ENCODE measurements at regions of chr9 and their contacts with region 1.

Region 1: DNA sequence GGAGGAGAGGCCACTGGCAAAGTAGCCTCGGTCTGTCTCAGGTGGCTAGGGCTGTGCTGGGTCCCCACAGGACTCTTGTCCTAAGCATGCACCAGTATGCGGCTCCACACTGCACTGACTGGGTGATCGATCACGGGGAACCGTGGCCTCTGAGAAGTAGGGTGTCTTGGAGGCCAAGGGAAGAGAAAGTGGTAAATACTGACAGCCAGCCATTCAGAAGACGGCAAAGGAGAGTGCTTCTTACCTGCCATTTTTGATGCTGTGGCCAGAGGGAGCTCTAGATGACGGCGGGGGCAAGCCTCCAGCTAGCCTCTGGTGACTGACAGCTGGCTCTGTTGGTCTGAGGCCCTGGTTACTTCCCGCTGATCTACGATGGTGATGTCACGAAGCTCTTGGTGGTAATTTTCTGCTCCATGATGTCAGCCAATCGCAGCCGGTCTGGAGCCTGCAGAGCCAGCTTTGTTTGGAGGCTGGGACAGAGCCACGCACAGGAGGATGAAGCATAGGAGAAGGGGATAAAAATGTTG is 40.4 kb upstream of the GADD45G start:
- DNase-seq: no peak
- ATAC-seq: peak; percentile 98
- H3K4me3 ChIP-seq: no peak overlapping the region
- H3K27ac ChIP-seq: no peak overlapping the region
- H3K4me1 ChIP-seq: peaks cover 6% of the 10 kb centered on the region; the same call in 1 of the 2 replicates
- H3K27me3 ChIP-seq: no peaks in the 10 kb centered on the region
- CTCF ChIP-seq: peak; percentile 46 to 50 (median 50)
- EP300 ChIP-seq: no peak
- POLR2A ChIP-seq: no peak
- RAD21 ChIP-seq: peak; percentile 21; the same call in 1 of the 2 replicates

Region 2: GRCh38 chr9:89036383-89036782 is 528.0 kb before region 1 on chr9:
- CTCF ChIA-PET with region 1: no interaction called
- POLR2A ChIA-PET with region 1: no interaction called
- RAD21 ChIA-PET with region 1: no interaction called
- SMC1A ChIA-PET with region 1: no interaction called
- in situ Hi-C with region 1: no loop called
- intact Hi-C with region 1: no loop called
- DNase-seq: no peak
- ATAC-seq: no peak
- H3K4me3 ChIP-seq: no peak overlapping the region
- H3K27ac ChIP-seq: no peak overlapping the region
- H3K4me1 ChIP-seq: no peaks in the 10 kb centered on the region
- H3K27me3 ChIP-seq: no peaks in the 10 kb centered on the region; a peak in 1 of 4 replicates
- CTCF ChIP-seq: no peak
- EP300 ChIP-seq: no peak
- POLR2A ChIP-seq: no peak
- RAD21 ChIP-seq: no peak

Region 3: GRCh38 chr9:89576404-89576839 is 12.0 kb after region 1 on chr9:
- CTCF ChIA-PET with region 1: interaction called, 17 read pairs
- POLR2A ChIA-PET with region 1: no interaction called
- RAD21 ChIA-PET with region 1: interaction called, 3 read pairs
- SMC1A ChIA-PET with region 1: interaction called, 4 read pairs
- in situ Hi-C with region 1: no loop called
- intact Hi-C with region 1: no loop called
- DNase-seq: no peak
- ATAC-seq: no peak
- H3K4me3 ChIP-seq: no peak overlapping the region
- H3K27ac ChIP-seq: no peak overlapping the region
- H3K4me1 ChIP-seq: no peaks in the 10 kb centered on the region
- H3K27me3 ChIP-seq: no peaks in the 10 kb centered on the region; a peak in 2 of 4 replicates
- CTCF ChIP-seq: peak; percentile 34 to 58 (median 49); a peak in 5 of 6 replicates
- EP300 ChIP-seq: no peak
- POLR2A ChIP-seq: no peak
- RAD21 ChIP-seq: peak; percentile 63

Region 4: GRCh38 chr9:89675058-89675742 is 110.8 kb after region 1 on chr9:
- CTCF ChIA-PET with region 1: no interaction called
- POLR2A ChIA-PET with region 1: no interaction called
- RAD21 ChIA-PET with region 1: no interaction called
- SMC1A ChIA-PET with region 1: no interaction called
- in situ Hi-C with region 1: no loop called
- intact Hi-C with region 1: no loop called
- DNase-seq: no peak
- ATAC-seq: no peak
- H3K4me3 ChIP-seq: no peak overlapping the region
- H3K27ac ChIP-seq: no peak overlapping the region
- H3K4me1 ChIP-seq: no peaks in the 10 kb centered on the region
- H3K27me3 ChIP-seq: no peaks in the 10 kb centered on the region; a peak in 1 of 4 replicates
- CTCF ChIP-seq: no peak
- EP300 ChIP-seq: no peak
- POLR2A ChIP-seq: no peak
- RAD21 ChIP-seq: no peak

Region 5: DNA sequence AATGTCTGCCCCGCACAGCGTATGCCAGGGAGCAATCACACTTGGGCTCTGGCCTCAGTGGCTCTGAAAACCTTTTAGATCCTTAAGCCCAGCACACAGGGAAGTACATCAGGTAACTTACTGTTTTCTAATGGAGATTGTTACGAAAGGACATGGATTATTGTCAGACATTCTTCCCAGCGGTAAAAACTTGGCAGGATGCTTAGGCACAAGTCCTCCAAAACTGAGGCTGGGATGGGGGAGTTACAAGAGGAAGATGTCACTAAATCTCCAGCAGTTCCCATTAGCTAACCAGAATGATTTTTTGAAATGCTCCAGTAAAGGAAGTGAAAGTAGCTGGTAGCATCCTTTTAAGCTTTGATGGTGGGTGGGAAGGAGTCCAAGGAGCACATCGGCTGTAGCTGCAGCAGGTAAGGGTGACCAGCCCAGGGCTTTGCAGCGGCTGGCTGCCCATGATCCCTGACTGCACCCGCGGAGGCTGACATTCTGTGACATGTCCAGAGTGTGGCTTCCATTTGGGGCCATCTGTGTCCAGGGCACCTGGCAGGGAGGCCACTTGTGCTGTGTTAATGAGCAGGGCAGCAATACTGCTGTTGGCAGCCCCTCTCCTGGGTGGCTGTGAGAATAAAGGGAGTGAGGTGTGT is 206.2 kb after region 1 on chr9:
- CTCF ChIA-PET with region 1: no interaction called
- POLR2A ChIA-PET with region 1: no interaction called
- RAD21 ChIA-PET with region 1: no interaction called
- SMC1A ChIA-PET with region 1: no interaction called
- in situ Hi-C with region 1: no loop called
- intact Hi-C with region 1: no loop called
- DNase-seq: no peak
- ATAC-seq: peak; percentile 39
- H3K4me3 ChIP-seq: no peak overlapping the region
- H3K27ac ChIP-seq: no peak overlapping the region
- H3K4me1 ChIP-seq: no peaks in the 10 kb centered on the region
- H3K27me3 ChIP-seq: no peaks in the 10 kb centered on the region
- CTCF ChIP-seq: no peak
- EP300 ChIP-seq: no peak
- POLR2A ChIP-seq: no peak
- RAD21 ChIP-seq: no peak

Measured in GM12878 (cell line).